ENCODE measurements at regions of chr20 and their contacts with region 1.

Region 1: GRCh38 chr20:45311589-45312211 is 3.6 kb upstream of the MATN4 start:
- DNase-seq: peak; percentile 77
- ATAC-seq: peak; percentile 79
- H3K4me3 Mint-ChIP-seq: no peak overlapping the region
- H3K27ac Mint-ChIP-seq: no peak overlapping the region
- H3K4me1 Mint-ChIP-seq: peaks cover 17% of the 10 kb centered on the region
- H3K27me3 Mint-ChIP-seq: peaks cover 43% of the 10 kb centered on the region

Region 2: DNA sequence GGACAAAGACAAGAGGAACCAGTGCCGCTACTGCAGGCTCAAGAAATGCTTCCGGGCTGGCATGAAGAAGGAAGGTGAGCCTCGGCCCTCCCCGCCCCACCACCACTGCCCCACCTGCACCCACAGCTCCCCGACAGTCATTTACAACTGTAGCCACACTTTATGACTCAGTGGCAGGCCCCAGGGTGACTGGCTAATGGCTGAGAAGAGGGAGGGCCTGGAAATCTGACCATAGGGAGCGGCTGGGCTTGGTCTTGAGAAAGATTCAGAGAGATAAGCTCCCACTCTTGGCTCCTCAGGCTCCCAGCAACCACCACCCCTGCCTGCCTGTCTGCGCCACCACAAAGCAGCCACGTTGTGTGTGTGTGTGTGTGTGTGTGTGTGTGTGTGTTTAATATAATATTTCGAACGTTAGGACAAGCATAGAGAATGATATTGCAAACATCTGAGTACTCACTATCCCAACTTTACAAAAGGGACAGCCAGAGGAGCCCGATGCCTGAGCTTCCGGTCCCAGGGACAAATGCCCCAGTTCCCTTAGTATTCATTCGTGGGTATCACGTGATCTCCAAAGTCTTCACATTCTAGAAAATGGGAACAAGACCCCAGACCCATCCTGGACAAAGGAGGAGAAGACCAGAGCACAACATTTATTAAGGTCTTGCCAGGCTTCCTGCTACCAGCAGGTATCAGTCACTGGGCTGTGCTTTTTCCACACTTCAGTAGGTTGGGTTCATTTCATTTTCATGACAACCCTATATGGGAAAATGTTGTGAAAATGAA is 904.1 kb before region 1 on chr20:
- CTCF ChIA-PET with region 1: no interaction called
- DNase-seq: no peak
- ATAC-seq: no peak
- H3K4me3 Mint-ChIP-seq: no peak overlapping the region
- H3K27ac Mint-ChIP-seq: no peak overlapping the region
- H3K4me1 Mint-ChIP-seq: no peaks in the 10 kb centered on the region
- H3K27me3 Mint-ChIP-seq: peaks cover 7% of the 10 kb centered on the region

Region 3: GRCh38 chr20:44990425-44990824 is 321.3 kb before region 1 on chr20:
- CTCF ChIA-PET with region 1: no interaction called
- DNase-seq: peak; percentile 73
- ATAC-seq: peak; percentile 76
- H3K4me3 Mint-ChIP-seq: peak overlapping the region; percentile 67
- H3K27ac Mint-ChIP-seq: peak overlapping the region; percentile 86
- H3K4me1 Mint-ChIP-seq: peaks cover 65% of the 10 kb centered on the region
- H3K27me3 Mint-ChIP-seq: no peaks in the 10 kb centered on the region

Region 4: DNA sequence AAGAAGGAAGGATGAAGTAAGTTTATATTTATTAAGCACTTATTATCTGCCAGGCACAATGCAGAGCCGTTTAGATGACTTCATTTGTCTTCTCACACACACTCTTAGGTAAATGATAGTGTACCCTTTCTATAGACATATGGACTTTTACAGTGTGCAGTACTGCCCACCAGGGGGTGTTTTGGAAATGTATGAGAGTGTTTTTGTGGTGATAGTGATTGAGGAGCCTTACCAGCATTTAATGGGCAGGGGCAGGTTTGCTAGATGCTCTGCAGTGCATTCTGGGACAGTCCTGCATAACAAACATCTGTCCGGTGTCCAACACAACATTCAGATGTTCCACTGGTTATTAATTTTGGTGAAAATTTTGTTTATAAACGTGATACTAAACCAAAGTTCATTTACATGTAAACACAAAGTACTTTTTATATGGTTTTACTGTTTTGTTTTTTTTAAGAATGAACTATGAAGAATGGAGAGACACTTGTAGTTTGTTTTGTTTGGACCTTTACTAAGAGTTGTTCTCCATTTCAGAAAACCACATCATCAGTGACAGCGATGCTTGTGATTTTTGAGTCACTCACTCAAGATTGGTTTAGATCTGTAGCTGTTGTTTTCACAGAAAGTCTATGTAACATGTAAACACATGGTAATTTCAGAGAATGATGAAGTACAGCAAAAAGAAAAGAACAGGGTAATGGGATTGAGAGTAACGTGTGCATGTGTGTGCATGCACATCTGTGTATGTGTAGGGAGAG is 230.7 kb before region 1 on chr20:
- CTCF ChIA-PET with region 1: no interaction called
- DNase-seq: no peak
- ATAC-seq: peak; percentile 33
- H3K4me3 Mint-ChIP-seq: no peak overlapping the region
- H3K27ac Mint-ChIP-seq: no peak overlapping the region
- H3K4me1 Mint-ChIP-seq: peaks cover 2% of the 10 kb centered on the region
- H3K27me3 Mint-ChIP-seq: no peaks in the 10 kb centered on the region

Region 5: GRCh38 chr20:45300961-45301360 is 10.7 kb before region 1 on chr20:
- CTCF ChIA-PET with region 1: interaction called, 23 read pairs
- DNase-seq: peak; percentile 75
- ATAC-seq: peak; percentile 69
- H3K4me3 Mint-ChIP-seq: no peak overlapping the region
- H3K27ac Mint-ChIP-seq: no peak overlapping the region
- H3K4me1 Mint-ChIP-seq: peaks cover 42% of the 10 kb centered on the region
- H3K27me3 Mint-ChIP-seq: peaks cover 29% of the 10 kb centered on the region

Region 6: DNA sequence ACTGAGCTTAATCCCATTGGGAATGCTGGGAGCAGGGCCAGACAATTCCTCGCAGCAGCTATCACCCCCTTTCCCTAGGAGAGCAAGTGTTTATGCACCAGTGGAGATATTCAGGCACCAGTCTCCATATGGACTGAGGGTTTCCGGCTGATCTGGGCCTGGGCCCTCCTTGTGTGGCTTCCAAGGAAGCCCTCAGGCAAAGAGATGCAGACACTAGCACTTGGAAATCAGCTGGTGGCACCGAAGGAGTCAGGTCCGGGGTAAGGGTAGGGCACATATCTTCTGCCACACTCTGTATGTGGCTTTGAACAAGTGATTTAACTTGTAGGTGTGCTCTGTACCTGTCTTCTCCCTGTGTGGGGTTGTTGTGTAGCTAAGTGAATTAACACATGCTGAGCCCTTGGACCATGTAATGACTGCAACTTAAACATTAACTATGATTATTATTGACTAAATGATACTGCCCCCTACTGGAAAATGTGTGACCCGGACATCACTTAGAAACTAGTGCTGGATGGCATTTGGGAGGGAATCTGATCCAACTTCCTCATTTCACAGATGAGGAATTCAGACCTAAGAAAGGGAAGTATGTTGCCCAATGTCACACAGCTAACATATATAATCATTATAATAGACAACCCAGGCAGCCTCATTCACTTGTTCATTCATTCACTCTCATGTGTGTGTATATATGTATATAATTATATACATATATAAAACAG is 138.6 kb after region 1 on chr20:
- CTCF ChIA-PET with region 1: interaction called, 10 read pairs
- DNase-seq: no peak
- ATAC-seq: peak; percentile 34
- H3K4me3 Mint-ChIP-seq: no peak overlapping the region
- H3K27ac Mint-ChIP-seq: no peak overlapping the region
- H3K4me1 Mint-ChIP-seq: peaks cover 15% of the 10 kb centered on the region
- H3K27me3 Mint-ChIP-seq: peaks cover 8% of the 10 kb centered on the region